ENCODE measurements at regions of chr17 and their contacts with region 1.

Region 1: DNA sequence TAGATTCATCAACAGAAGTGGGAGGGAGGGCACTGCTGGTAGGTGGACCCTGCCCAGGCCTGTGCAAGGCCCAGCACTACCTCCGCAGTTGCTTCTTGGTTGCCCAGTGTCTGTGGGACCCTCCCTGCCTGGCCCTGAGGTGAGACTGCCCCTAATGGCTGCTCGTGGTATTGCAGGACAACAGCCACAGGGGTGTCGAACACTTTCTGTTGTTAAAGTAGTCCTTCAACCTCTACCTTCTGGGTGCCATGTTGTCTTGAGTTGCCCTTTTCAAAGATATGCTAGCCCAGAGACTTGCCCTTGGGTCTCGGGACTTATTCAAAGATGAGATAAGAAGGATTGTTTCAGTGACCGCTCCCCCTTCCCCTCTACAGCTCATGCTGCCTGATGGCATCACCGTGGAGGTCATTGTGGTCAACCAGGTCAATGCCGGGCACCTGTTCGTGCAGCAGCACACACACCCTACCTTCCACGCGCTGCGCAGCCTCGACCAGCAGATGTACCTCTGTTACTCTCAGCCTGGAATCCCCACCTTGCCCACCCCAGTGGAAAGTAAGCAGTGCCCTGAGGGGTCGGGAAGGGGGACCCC is 29.1 kb downstream of the AKAP1 start:
- DNase-seq: peak; percentile 52 to 81 (median 65)
- ATAC-seq: peak; percentile 91
- H3K4me3 ChIP-seq: no peak overlapping the region
- H3K4me3 Mint-ChIP-seq: no peak overlapping the region
- H3K27ac ChIP-seq: no peak overlapping the region
- H3K27ac Mint-ChIP-seq: no peak overlapping the region
- H3K4me1 ChIP-seq: no peaks in the 10 kb centered on the region
- H3K4me1 Mint-ChIP-seq: no peaks in the 10 kb centered on the region
- H3K27me3 ChIP-seq: no peaks in the 10 kb centered on the region
- H3K27me3 Mint-ChIP-seq: no peaks in the 10 kb centered on the region
- CTCF ChIP-seq: peak; percentile 87

Region 2: GRCh38 chr17:56908001-56908542 is 206.1 kb before region 1 on chr17:
- CTCF ChIA-PET with region 1: no interaction called
- POLR2A ChIA-PET with region 1: no interaction called
- intact Hi-C with region 1: no loop called
- DNase-seq: peak in 6 of 9 experiments; percentile 16 to 64 (median 36)
- ATAC-seq: peak; percentile 75
- H3K4me3 ChIP-seq: no peak overlapping the region
- H3K4me3 Mint-ChIP-seq: no peak overlapping the region
- H3K27ac ChIP-seq: peak overlapping the region in 1 of 2 experiments; percentile 8
- H3K27ac Mint-ChIP-seq: peak overlapping the region; percentile 84
- H3K4me1 ChIP-seq: peaks cover 33% of the 10 kb centered on the region
- H3K4me1 Mint-ChIP-seq: peaks cover 58% of the 10 kb centered on the region
- H3K27me3 ChIP-seq: no peaks in the 10 kb centered on the region
- H3K27me3 Mint-ChIP-seq: no peaks in the 10 kb centered on the region
- CTCF ChIP-seq: no peak

Region 3: GRCh38 chr17:57009737-57010445 is 104.3 kb before region 1 on chr17:
- CTCF ChIA-PET with region 1: interaction called, 6 read pairs
- POLR2A ChIA-PET with region 1: no interaction called
- intact Hi-C with region 1: loop called (anchors 1 to 5 kb)
- DNase-seq: peak; percentile 14 to 69 (median 50)
- ATAC-seq: peak; percentile 89
- H3K4me3 ChIP-seq: no peak overlapping the region
- H3K4me3 Mint-ChIP-seq: peak overlapping the region; percentile 36
- H3K27ac ChIP-seq: no peak overlapping the region
- H3K27ac Mint-ChIP-seq: no peak overlapping the region
- H3K4me1 ChIP-seq: no peaks in the 10 kb centered on the region
- H3K4me1 Mint-ChIP-seq: peaks cover 7% of the 10 kb centered on the region
- H3K27me3 ChIP-seq: no peaks in the 10 kb centered on the region
- H3K27me3 Mint-ChIP-seq: peaks cover 2% of the 10 kb centered on the region
- CTCF ChIP-seq: peak; percentile 66